GM12878 (cell line): ENCODE measurements at regions of chr14 and their contacts with region 1.

Region 1: DNA sequence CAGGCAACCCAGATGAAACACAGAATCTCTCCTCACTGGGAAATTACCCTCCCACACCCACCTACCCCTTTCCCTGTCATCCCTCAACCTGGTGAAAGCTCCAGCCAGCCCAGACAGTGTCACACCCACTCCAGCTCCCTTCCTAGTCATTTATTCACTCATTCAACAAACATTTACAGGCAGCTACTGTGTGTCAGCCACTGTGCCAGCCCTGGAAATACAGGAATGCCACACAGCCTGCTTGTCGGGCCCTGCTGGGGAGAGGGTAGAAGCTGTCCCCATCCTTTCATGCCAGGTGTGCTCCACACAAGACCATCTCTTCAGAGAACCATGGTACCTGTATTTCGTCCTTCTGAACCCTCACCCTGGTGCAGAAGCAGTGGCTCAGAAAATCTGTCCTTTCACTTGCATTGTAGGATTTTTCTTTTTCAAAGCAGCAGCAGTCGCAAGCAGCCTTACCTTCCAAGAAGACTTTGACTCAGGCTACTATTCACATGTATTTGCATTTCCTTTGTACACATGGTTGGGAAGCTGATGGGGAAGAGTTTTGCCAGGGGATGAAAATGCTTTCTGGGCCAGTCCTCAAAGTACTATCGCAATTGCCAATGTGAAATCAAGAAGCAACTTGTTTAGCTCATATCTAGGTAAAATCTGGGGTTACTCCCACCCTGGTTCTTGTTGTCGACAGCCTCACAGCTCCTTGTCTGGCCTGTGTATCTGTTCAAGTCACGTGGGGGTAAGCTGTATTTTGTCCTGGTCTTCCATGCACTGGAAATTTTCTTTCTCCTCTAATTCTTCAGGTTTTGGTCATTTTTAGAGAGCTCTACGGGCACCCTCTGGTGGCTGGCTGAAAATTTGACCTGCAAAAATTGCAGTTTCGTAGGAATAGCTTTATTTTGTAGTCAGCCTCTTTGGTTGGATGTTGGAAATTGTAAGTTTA is 147.4 kb upstream of the EGLN3 start:
- DNase-seq: peak; percentile 36
- ATAC-seq: peak; percentile 59
- H3K4me3 ChIP-seq: no peak overlapping the region
- H3K27ac ChIP-seq: no peak overlapping the region
- H3K4me1 ChIP-seq: no peaks in the 10 kb centered on the region
- H3K27me3 ChIP-seq: no peaks in the 10 kb centered on the region
- CTCF ChIP-seq: peak; percentile 57 to 74 (median 63); a peak in 5 of 6 replicates
- EP300 ChIP-seq: no peak
- POLR2A ChIP-seq: no peak
- RAD21 ChIP-seq: peak; percentile 92

Region 2: DNA sequence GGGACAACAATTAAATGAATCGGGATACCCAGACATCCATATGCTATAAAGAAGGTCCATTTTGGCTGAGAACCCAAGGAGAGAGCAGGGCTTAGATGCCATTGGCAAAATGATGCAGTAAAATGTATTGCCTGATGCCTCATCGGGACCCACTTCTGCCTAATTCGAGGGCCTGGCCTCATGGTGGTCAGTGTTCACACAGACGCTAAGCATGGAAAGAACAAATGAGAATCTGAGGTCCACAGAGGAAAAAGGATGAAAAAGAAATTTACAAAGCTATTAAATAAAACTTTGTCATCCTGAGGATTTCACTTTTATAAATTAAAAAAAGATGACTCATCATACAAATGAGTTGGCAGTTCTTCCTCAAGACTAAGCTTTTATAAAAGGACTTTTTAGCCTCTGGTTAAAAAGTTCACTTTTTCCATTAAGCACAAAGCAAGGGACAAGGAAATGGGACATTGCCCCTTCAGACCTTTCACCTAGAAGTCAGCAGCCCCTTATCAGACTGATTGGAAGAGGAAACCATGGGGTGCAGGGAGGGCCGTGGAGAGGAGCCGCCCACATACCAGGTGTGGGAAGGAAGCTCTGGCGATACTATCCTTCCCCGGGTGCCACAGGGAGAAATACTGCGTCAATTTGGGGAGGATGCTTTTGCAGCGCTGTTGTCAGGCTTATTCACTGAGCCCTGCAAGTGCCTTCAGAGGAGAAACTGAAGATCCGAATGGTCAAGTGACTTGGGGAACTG is 323.4 kb before region 1 on chr14:
- CTCF ChIA-PET with region 1: no interaction called
- POLR2A ChIA-PET with region 1: no interaction called
- RAD21 ChIA-PET with region 1: no interaction called
- SMC1A ChIA-PET with region 1: no interaction called
- in situ Hi-C with region 1: no loop called
- intact Hi-C with region 1: no loop called
- DNase-seq: no peak
- ATAC-seq: no peak
- H3K4me3 ChIP-seq: no peak overlapping the region
- H3K27ac ChIP-seq: no peak overlapping the region
- H3K4me1 ChIP-seq: no peaks in the 10 kb centered on the region
- H3K27me3 ChIP-seq: peaks cover 0 to 4% of the 10 kb centered on the region in 2 experiments; a peak in 1 of 4 replicates
- CTCF ChIP-seq: no peak
- EP300 ChIP-seq: no peak
- POLR2A ChIP-seq: no peak
- RAD21 ChIP-seq: no peak

Region 3: DNA sequence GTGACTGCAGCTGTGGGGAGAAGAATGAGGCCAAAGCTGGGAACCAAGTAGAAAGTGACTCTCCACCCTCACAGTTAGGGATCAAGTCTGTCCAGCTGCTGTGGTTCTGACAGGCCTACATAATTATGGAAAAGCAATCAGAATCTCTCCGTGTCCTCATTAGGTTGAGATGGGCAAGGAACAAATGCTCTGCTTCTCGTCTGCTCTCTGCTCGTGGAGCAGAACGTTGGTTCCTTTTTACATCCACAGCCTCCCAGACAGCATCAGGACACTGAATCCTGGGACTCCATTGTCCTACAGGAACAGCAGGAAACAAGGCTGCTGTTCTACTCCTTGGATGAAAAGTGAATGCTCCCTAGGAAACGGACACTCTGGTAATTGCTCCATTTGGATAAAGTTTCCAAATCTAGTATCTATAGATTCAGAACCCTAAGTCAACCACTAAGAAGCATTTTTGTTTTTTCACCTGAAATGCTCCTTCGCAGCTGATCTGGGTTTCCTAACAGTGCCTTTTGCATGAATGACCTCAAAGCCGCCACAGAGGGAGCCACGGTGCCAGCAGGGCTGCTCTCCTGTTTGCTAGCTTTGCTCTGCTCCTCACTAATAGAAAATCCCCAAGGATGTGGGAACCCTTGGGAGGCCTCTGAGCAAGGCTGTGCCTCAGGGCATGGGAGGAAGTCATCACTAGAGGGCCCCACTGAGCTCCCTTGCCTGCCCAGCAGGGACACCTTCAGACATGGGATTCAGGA is 249.4 kb before region 1 on chr14:
- CTCF ChIA-PET with region 1: interaction called, 809 read pairs
- POLR2A ChIA-PET with region 1: interaction called, 4 read pairs
- RAD21 ChIA-PET with region 1: interaction called, 466 read pairs
- SMC1A ChIA-PET with region 1: interaction called, 668 read pairs
- in situ Hi-C with region 1: no loop called
- intact Hi-C with region 1: loop called (anchors 2 kb)
- DNase-seq: no peak
- ATAC-seq: peak; percentile 86
- H3K4me3 ChIP-seq: no peak overlapping the region
- H3K27ac ChIP-seq: no peak overlapping the region
- H3K4me1 ChIP-seq: no peaks in the 10 kb centered on the region
- H3K27me3 ChIP-seq: no peaks in the 10 kb centered on the region; a peak in 1 of 4 replicates
- CTCF ChIP-seq: peak; percentile 57 to 74 (median 68)
- EP300 ChIP-seq: no peak
- POLR2A ChIP-seq: no peak
- RAD21 ChIP-seq: peak; percentile 71

Region 4: GRCh38 chr14:33950320-33951182 is 147.8 kb before region 1 on chr14 and contains the start of gene EGLN3:
- CTCF ChIA-PET with region 1: interaction called, 176 read pairs
- POLR2A ChIA-PET with region 1: interaction called, 4 read pairs
- RAD21 ChIA-PET with region 1: interaction called, 168 read pairs
- SMC1A ChIA-PET with region 1: interaction called, 184 read pairs
- in situ Hi-C with region 1: no loop called
- intact Hi-C with region 1: no loop called
- DNase-seq: no peak
- ATAC-seq: peak; percentile 76
- H3K4me3 ChIP-seq: peak within 1 kb of the TSS; percentile 69
- H3K27ac ChIP-seq: no peak within 1 kb of the TSS
- H3K4me1 ChIP-seq: peaks cover 5% of the 10 kb centered on the region; the same call in 1 of the 2 replicates
- H3K27me3 ChIP-seq: peaks cover 0 to 8% of the 10 kb centered on the region in 2 experiments; a peak in 2 of 4 replicates
- CTCF ChIP-seq: no peak
- EP300 ChIP-seq: 0 out of 4 replicates have a peak, but pooled peaks of 1 of the 2 experiments have one; percentile 10
- POLR2A ChIP-seq: peak; percentile 84
- RAD21 ChIP-seq: no peak
- polyA plus RNA-seq, gene EGLN3: 1.4 to 2.1 TPM

Region 5: DNA sequence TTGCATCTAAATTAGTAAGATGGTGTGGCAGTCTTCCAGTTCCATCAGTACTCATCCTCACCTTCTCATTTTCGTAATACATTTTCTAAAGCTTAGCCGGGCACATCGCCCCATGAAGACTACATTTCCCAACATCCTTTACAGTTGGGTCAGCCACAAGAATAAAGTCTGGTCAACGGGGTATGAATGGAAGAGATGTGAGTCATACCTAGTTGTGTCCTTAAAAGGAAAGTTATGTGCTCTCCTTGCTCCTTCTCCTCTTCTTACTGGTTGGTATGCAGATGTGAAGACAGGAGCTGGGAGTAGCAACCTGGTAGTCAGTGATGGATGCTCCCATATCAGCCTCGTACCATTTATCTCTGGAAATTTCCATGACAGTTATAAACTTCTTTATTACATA is 111.5 kb before region 1 on chr14:
- CTCF ChIA-PET with region 1: interaction called, 12 read pairs
- POLR2A ChIA-PET with region 1: interaction called, 5 read pairs
- RAD21 ChIA-PET with region 1: interaction called, 7 read pairs
- SMC1A ChIA-PET with region 1: interaction called, 10 read pairs
- in situ Hi-C with region 1: no loop called
- intact Hi-C with region 1: no loop called
- DNase-seq: no peak
- ATAC-seq: peak; percentile 82
- H3K4me3 ChIP-seq: no peak overlapping the region
- H3K27ac ChIP-seq: no peak overlapping the region
- H3K4me1 ChIP-seq: no peaks in the 10 kb centered on the region
- H3K27me3 ChIP-seq: no peaks in the 10 kb centered on the region
- CTCF ChIP-seq: no peak
- EP300 ChIP-seq: no peak
- POLR2A ChIP-seq: no peak
- RAD21 ChIP-seq: no peak

Region 6: DNA sequence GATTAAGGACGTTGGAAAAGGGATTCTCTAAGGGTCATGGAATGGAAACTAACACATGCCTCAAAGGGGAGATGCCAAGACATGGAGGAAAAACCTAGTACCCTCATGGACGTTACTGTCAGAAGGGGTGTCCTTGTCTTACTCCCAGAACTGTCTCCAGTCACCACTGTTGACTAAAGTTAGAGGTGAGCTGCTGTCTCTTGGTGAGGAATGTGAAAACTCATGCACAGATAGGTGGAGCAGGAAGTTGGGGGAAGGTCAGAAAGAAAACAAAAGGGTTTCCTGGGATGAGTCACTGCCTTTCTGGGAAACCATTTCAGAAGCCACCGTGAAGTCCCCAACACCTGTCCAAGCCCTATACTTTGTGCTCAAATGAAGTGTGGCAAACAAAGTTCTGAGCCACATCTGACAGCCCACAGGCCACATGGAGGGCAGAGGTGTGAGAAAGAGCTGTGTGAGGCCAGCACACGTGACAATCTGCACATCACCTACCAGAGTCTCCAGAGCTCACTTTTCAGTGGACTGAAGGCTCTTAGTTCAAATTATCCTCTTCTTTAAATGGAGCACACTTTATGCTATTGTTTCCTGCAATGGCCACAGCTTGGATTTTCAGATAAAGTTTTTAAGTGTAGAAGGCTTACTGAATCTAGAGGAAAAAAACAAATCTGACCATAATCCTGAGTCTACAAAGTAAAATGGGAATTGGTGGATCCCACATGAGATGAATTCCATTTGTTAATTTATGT is 54.5 kb before region 1 on chr14:
- CTCF ChIA-PET with region 1: interaction called, 23 read pairs
- POLR2A ChIA-PET with region 1: interaction called, 3 read pairs
- RAD21 ChIA-PET with region 1: interaction called, 11 read pairs
- SMC1A ChIA-PET with region 1: interaction called, 43 read pairs
- in situ Hi-C with region 1: no loop called
- intact Hi-C with region 1: loop called (anchors 5 kb)
- DNase-seq: peak; percentile 97
- ATAC-seq: peak; percentile 97
- H3K4me3 ChIP-seq: peak overlapping the region; percentile 21; the same call in 1 of the 2 replicates
- H3K27ac ChIP-seq: 0 out of 2 replicates have a peak overlapping the region, but pooled peaks have one; percentile 22
- H3K4me1 ChIP-seq: peaks cover 36% of the 10 kb centered on the region
- H3K27me3 ChIP-seq: no peaks in the 10 kb centered on the region
- CTCF ChIP-seq: no peak
- EP300 ChIP-seq: peak; percentile 89 to 92
- POLR2A ChIP-seq: no peak
- RAD21 ChIP-seq: no peak

Region 7: GRCh38 chr14:34087556-34087955 is 10.8 kb before region 1 on chr14:
- CTCF ChIA-PET with region 1: interaction called, 35 read pairs
- POLR2A ChIA-PET with region 1: interaction called, 3 read pairs
- RAD21 ChIA-PET with region 1: interaction called, 35 read pairs
- SMC1A ChIA-PET with region 1: interaction called, 58 read pairs
- in situ Hi-C with region 1: no loop called
- intact Hi-C with region 1: no loop called
- DNase-seq: no peak
- ATAC-seq: peak; percentile 86
- H3K4me3 ChIP-seq: no peak overlapping the region
- H3K27ac ChIP-seq: no peak overlapping the region
- H3K4me1 ChIP-seq: no peaks in the 10 kb centered on the region
- H3K27me3 ChIP-seq: no peaks in the 10 kb centered on the region
- CTCF ChIP-seq: no peak
- EP300 ChIP-seq: no peak
- POLR2A ChIP-seq: no peak
- RAD21 ChIP-seq: no peak

Region 8: GRCh38 chr14:34300882-34301734 is 202.8 kb after region 1 on chr14:
- CTCF ChIA-PET with region 1: interaction called, 18 read pairs
- POLR2A ChIA-PET with region 1: no interaction called
- RAD21 ChIA-PET with region 1: interaction called, 9 read pairs
- SMC1A ChIA-PET with region 1: interaction called, 12 read pairs
- in situ Hi-C with region 1: no loop called
- intact Hi-C with region 1: loop called (anchors 10 kb)
- DNase-seq: peak; percentile 7
- ATAC-seq: peak; percentile 67
- H3K4me3 ChIP-seq: no peak overlapping the region
- H3K27ac ChIP-seq: no peak overlapping the region
- H3K4me1 ChIP-seq: no peaks in the 10 kb centered on the region
- H3K27me3 ChIP-seq: no peaks in the 10 kb centered on the region
- CTCF ChIP-seq: peak; percentile 51 to 59 (median 56); a peak in 5 of 6 replicates
- EP300 ChIP-seq: no peak
- POLR2A ChIP-seq: no peak
- RAD21 ChIP-seq: peak; percentile 62